HepG2 (cell line): ENCODE measurements at regions of chr6 and their contacts with region 1.

Region 1: GRCh38 chr6:159174263-159174969 is 5.2 kb downstream of the FNDC1 start:
- DNase-seq: peak; percentile 46
- ATAC-seq: peak; percentile 97
- H3K4me3 ChIP-seq: no peak overlapping the region
- H3K27ac ChIP-seq: no peak overlapping the region
- H3K4me1 ChIP-seq: no peaks in the 10 kb centered on the region
- H3K27me3 ChIP-seq: peaks cover 5 to 48% of the 10 kb centered on the region in 2 experiments
- CTCF ChIP-seq: peak; percentile 93
- EP300 ChIP-seq: no peak
- POLR2A ChIP-seq: no peak
- RAD21 ChIP-seq: peak; percentile 82

Region 2: DNA sequence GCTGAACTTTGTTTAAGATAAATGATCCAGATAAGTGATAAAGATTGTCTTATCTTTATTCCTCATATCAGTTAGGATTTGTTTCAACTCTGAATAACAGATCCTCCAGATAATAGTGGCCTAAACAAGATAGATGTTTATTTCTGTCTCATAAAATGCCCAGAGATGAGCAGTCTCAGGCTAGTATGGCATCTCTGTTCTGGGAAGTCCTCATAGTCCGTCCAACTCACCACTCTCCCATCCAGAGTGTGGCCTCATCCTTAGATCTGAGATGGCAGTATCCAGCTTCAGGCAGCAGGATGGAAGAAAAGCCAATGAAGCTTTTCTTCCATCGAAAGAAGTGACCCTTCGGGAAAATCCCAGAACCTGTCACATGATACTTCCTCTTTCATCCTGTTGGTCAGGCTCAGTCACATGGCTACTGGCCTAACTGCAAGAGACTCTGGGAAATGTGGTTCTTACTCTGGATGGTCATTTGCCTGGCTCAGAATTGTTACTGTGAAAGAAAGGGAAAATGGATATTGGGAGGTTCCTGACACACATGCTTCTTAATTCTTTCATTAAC is 100.2 kb before region 1 on chr6:
- CTCF ChIA-PET with region 1: no interaction called
- POLR2A ChIA-PET with region 1: no interaction called
- in situ Hi-C with region 1: no loop called
- intact Hi-C with region 1: no loop called
- DNase-seq: no peak
- ATAC-seq: peak; percentile 47; the same call in 2 of the 3 replicates
- H3K4me3 ChIP-seq: no peak overlapping the region
- H3K27ac ChIP-seq: no peak overlapping the region
- H3K4me1 ChIP-seq: peaks cover 8% of the 10 kb centered on the region; the same call in 1 of the 2 replicates
- H3K27me3 ChIP-seq: peaks cover 1 to 43% of the 10 kb centered on the region in 2 experiments; a peak in 4 of 5 replicates
- CTCF ChIP-seq: no peak
- EP300 ChIP-seq: no peak
- POLR2A ChIP-seq: no peak
- RAD21 ChIP-seq: no peak

Region 3: GRCh38 chr6:159204605-159205004 is 30.2 kb after region 1 on chr6:
- CTCF ChIA-PET with region 1: no interaction called
- POLR2A ChIA-PET with region 1: no interaction called
- in situ Hi-C with region 1: no loop called
- intact Hi-C with region 1: no loop called
- DNase-seq: no peak
- ATAC-seq: no peak
- H3K4me3 ChIP-seq: no peak overlapping the region
- H3K27ac ChIP-seq: no peak overlapping the region
- H3K4me1 ChIP-seq: no peaks in the 10 kb centered on the region
- H3K27me3 ChIP-seq: peaks cover 0 to 30% of the 10 kb centered on the region in 2 experiments; a peak in 2 of 5 replicates
- CTCF ChIP-seq: no peak
- EP300 ChIP-seq: no peak
- POLR2A ChIP-seq: no peak
- RAD21 ChIP-seq: no peak

Region 4: DNA sequence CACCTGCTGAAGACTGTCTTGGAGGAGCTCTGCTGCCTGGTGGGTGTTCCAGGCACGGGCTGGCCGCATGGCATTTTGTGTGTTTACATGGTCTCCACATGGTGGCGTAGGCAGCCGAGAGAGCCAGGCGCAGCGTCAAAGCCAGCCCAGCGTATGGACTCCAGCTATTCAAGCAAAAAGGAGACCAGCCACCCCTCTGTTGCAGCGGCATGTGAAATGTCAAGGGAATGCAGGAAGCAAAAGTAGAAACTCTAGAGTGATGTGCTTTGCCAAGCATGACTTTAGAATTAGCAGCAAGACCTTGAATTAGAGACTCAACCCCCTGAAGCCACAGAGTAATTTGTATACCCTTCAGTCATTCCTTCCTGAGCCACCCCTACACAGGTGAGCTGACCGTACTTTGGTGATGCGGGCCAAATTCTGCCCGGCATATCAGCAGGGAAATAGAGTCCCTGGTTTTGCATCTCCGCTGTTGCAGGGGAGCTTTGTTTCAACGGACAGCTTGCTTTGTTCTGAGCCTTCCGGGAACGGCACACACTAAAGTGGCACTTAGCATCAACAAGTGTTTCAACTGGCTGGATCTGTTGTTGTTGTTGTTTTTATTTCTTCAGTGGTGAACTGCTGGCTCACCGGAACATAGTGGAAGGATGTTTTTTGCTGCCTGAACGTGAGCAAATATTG is 43.3 kb after region 1 on chr6:
- CTCF ChIA-PET with region 1: no interaction called
- POLR2A ChIA-PET with region 1: no interaction called
- in situ Hi-C with region 1: no loop called
- intact Hi-C with region 1: no loop called
- DNase-seq: peak; percentile 29
- ATAC-seq: peak; percentile 95
- H3K4me3 ChIP-seq: no peak overlapping the region
- H3K27ac ChIP-seq: no peak overlapping the region
- H3K4me1 ChIP-seq: no peaks in the 10 kb centered on the region
- H3K27me3 ChIP-seq: peaks cover 9 to 46% of the 10 kb centered on the region in 2 experiments
- CTCF ChIP-seq: peak; percentile 79
- EP300 ChIP-seq: no peak
- POLR2A ChIP-seq: no peak
- RAD21 ChIP-seq: peak; percentile 76

Region 5: DNA sequence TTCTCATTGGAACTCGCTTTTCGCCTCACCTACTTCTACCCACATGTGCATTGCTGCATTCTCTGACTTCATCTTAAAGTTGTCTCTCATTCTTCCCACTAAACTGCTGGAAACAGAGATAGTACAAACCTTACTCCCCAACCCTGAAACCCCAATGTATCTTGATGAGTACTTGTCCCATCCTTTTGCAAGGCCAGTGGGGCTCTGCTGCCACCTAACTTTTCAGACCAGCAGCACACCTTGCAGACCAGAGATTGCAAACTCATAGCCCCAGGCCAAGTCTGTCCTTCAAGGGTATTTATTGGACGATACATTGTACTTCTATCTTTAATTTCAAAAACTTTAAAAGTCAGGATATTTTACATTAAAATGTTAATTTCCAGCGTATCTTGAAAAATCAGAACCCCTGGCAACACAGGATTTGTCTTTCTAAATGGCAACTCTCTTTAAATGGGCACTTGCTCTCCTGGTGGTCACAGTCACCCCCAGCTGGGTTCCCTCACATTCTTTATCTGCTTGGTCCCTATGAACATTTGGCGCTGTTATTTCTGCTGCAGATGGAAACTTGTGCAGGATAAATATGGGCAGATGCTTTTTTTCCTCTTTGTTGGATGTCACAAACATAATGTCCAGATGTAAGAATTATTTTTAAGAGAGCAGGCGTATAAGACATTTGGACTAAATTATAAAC is 434.7 kb after region 1 on chr6:
- CTCF ChIA-PET with region 1: no interaction called
- POLR2A ChIA-PET with region 1: no interaction called
- in situ Hi-C with region 1: no loop called
- intact Hi-C with region 1: loop called (anchors 1 kb)
- DNase-seq: peak; percentile 47
- ATAC-seq: peak; percentile 94
- H3K4me3 ChIP-seq: no peak overlapping the region
- H3K27ac ChIP-seq: no peak overlapping the region
- H3K4me1 ChIP-seq: no peaks in the 10 kb centered on the region
- H3K27me3 ChIP-seq: 0 out of 5 replicates have a peak, but pooled peaks cover 0 to 7% of the 10 kb centered on the region in 2 experiments
- CTCF ChIP-seq: peak; percentile 82
- EP300 ChIP-seq: no peak
- POLR2A ChIP-seq: no peak
- RAD21 ChIP-seq: peak; percentile 52

Region 6: GRCh38 chr6:159646733-159647132 is 472.3 kb after region 1 on chr6:
- CTCF ChIA-PET with region 1: no interaction called
- POLR2A ChIA-PET with region 1: no interaction called
- in situ Hi-C with region 1: loop called (anchors 5 kb)
- intact Hi-C with region 1: no loop called
- DNase-seq: no peak
- ATAC-seq: no peak
- H3K4me3 ChIP-seq: no peak overlapping the region
- H3K27ac ChIP-seq: no peak overlapping the region
- H3K4me1 ChIP-seq: no peaks in the 10 kb centered on the region
- H3K27me3 ChIP-seq: 0 out of 5 replicates have a peak, but pooled peaks cover 0 to 2% of the 10 kb centered on the region in 2 experiments
- CTCF ChIP-seq: no peak
- EP300 ChIP-seq: no peak
- POLR2A ChIP-seq: no peak
- RAD21 ChIP-seq: no peak